ENCODE measurements at regions of chr4 and their contacts with region 1.

Region 1: GRCh38 chr4:152500800-152501434 is 35.0 kb downstream of the FBXW7 start:
- DNase-seq: peak; percentile 56
- H3K4me3 Mint-ChIP-seq: no peak overlapping the region
- H3K27ac Mint-ChIP-seq: no peak overlapping the region
- H3K4me1 Mint-ChIP-seq: peaks cover 27% of the 10 kb centered on the region
- H3K27me3 Mint-ChIP-seq: no peaks in the 10 kb centered on the region

Region 2: GRCh38 chr4:152408514-152409327 is 92.2 kb before region 1 on chr4:
- intact Hi-C with region 1: loop called (anchors 1 kb)
- DNase-seq: no peak
- H3K4me3 Mint-ChIP-seq: no peak overlapping the region
- H3K27ac Mint-ChIP-seq: no peak overlapping the region
- H3K4me1 Mint-ChIP-seq: peaks cover 18% of the 10 kb centered on the region
- H3K27me3 Mint-ChIP-seq: no peaks in the 10 kb centered on the region

Region 3: GRCh38 chr4:152460488-152460887 is 40.4 kb before region 1 on chr4:
- intact Hi-C with region 1: loop called (anchors 5 kb)
- DNase-seq: no peak
- H3K4me3 Mint-ChIP-seq: no peak overlapping the region
- H3K27ac Mint-ChIP-seq: peak overlapping the region; percentile 59
- H3K4me1 Mint-ChIP-seq: peaks cover 79% of the 10 kb centered on the region
- H3K27me3 Mint-ChIP-seq: no peaks in the 10 kb centered on the region

Region 4: GRCh38 chr4:152572417-152573086 is 71.6 kb after region 1 on chr4:
- intact Hi-C with region 1: no loop called
- DNase-seq: no peak
- H3K4me3 Mint-ChIP-seq: no peak overlapping the region
- H3K27ac Mint-ChIP-seq: no peak overlapping the region
- H3K4me1 Mint-ChIP-seq: no peaks in the 10 kb centered on the region
- H3K27me3 Mint-ChIP-seq: peaks cover 7% of the 10 kb centered on the region

Region 5: DNA sequence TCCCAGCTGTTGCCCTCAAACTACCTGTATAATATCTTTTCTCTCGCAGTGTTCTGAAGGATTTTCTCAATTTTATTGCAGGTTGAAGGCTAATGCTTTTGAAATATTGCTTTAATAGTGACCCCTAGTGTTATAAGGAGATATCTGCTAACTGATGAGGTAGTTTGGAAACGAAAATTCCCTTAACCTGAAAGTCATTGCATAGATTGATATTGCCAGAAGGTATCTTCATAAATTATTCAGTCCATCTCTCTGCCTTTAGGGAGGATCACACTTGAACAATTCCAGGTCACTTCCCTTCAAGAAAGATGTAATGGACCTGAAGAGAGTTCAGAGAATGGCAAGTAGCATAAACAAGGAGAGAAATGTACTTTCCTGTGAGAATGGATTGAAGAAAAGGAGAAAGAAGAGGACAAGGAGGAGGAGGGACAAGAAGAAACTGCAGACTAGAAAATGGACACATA is 234.5 kb after region 1 on chr4:
- intact Hi-C with region 1: loop called (anchors 1 kb)
- DNase-seq: no peak
- H3K4me3 Mint-ChIP-seq: no peak overlapping the region
- H3K27ac Mint-ChIP-seq: no peak overlapping the region
- H3K4me1 Mint-ChIP-seq: peaks cover 4% of the 10 kb centered on the region
- H3K27me3 Mint-ChIP-seq: peaks cover 6% of the 10 kb centered on the region

Measured in activated T-helper 1 cell treated with anti-CD3 and anti-CD28 coated beads, Interleukin-12 subunit alpha, Interleukin-12 subunit beta, Interleukin-2, Interleukin-4 antibody, amounts not matched to agents 30 ng/mL and 10 ng/mL and 1 ng/mL, durations not matched to agents 14 hours and 24 hours and 36 hours (primary cell).